HCT116 (cell line): ENCODE measurements at regions of chr16 and their contacts with region 1.

Region 1: DNA sequence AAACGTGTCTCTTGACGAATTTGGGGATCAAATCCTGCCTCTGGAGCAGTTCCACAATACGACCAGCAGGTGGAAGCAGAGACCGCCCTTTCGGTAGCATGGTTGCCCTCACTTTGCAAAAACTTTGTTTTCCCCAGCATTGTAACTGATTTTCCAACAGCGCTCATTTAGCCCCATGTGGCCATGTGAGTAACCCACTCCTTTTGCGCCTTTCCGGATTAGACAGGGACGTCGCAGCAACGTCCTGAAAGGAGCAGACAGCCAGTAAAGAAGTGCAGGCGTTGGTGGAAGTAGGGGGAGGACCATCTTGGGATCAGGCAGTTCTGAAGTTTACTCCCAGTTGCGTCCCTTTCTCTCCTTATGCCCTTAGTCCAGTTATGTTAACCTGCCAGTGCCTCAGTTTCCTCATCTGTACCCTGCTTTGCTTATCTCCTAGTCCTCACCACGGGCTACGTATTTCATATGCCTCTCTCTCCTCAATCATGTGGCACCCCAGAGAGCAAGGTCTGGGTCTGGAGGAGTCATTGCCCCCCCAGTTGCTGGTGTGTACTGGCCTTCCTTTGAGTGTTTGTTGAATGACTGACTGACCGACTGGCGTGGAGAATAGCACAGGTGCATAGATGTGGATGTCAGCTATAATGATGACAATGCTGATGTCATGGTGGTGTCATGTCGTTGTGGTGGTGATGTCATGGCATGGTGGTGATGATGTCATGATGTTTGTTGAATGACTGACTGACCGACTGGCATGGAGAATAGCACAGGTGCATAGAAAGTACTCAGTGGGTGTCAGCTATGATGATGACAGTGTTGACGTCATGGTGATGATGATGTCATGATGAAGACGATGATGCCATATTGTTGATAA is 22.3 kb downstream of the TMEM114 start:
- DNase-seq: peak; percentile 94
- ATAC-seq: peak; percentile 89
- H3K4me3 ChIP-seq: no peak overlapping the region
- H3K27ac ChIP-seq: no peak overlapping the region
- H3K4me1 ChIP-seq: peaks cover 0 to 4% of the 10 kb centered on the region in 2 experiments; a peak in 1 of 4 replicates
- H3K27me3 ChIP-seq: no peaks in the 10 kb centered on the region
- CTCF ChIP-seq: peak; percentile 98 to 99 (median 99)
- POLR2A ChIP-seq: no peak
- RAD21 ChIP-seq: peak; percentile 99

Region 2: DNA sequence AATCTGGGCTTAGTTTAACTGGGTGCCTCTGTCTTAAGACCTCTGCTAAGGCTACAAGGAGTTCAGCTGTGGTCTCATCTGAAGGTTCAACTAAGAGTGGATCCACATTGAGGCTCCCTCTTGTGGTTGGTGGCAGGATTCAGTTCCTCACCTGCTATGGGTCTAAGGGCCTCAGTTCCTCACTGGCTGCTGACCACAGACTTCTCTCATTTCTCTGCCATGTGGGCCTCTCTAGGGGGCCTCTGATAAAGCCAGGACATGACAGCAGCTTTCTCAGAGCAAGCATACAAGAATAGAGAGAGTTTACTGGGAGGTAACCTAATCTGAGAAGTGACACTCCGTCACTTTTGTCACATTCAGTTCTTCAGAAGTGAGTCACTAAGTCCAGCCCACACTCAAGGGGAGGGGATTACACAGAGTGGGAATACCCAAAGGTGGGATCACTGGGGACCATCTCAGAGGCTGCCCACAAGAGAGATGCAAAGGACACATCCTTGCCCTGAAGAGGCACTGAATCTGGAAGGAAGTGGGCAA is 87.3 kb after region 1 on chr16:
- CTCF ChIA-PET with region 1: interaction called, 3 read pairs
- POLR2A ChIA-PET with region 1: no interaction called
- RAD21 ChIA-PET with region 1: no interaction called
- intact Hi-C with region 1: loop called (anchors 2 kb)
- DNase-seq: no peak
- ATAC-seq: peak; percentile 62; the same call in 1 of the 2 replicates
- H3K4me3 ChIP-seq: no peak overlapping the region
- H3K27ac ChIP-seq: no peak overlapping the region
- H3K4me1 ChIP-seq: no peaks in the 10 kb centered on the region
- H3K27me3 ChIP-seq: no peaks in the 10 kb centered on the region
- CTCF ChIP-seq: peak; percentile 27 to 56 (median 55); a peak in 5 of 6 replicates
- POLR2A ChIP-seq: no peak
- RAD21 ChIP-seq: peak; percentile 38; the same call in 1 of the 2 replicates

Region 3: DNA sequence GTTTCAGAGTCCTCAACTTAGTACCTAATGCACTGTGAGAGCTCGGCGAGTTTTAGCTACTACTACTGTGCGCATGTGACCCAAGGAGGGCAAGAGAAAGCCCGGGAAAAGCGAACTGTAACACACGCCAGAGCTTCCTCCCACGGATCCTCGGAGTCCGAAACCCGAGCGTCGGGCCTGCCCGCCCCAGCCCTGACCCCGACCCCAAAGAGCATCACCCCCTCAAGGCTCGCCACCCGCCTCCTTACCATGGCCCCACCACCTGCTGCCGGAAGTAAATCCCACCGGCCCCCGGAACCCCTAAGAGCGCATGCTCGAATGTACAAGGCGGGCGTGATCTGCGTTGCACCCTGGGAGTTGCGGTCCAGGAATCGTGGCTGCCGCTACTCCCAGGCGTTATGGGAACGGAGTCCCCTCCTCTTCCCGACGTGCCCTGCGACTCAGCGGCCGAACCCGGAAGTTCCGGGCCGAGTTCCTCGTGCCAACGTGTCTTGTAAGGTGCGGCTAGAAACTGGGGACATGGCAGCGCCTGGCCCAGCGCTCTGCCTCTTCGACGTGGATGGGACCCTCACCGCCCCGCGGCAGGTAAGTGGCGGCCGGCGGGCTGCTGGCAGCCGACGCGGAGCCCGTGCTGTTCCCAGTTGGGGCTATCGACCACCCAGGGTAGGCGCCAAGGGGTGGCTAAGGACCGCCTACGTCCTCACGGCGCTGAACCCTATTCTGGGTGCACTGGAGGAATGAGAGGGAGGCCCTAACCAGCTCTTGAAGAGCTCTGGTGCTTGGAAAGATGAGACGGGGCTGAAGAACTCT is 229.6 kb after region 1 on chr16 and contains the starts of genes PMM2 and TMEM186:
- CTCF ChIA-PET with region 1: no interaction called
- POLR2A ChIA-PET with region 1: no interaction called
- RAD21 ChIA-PET with region 1: no interaction called
- intact Hi-C with region 1: loop called (anchors 1 kb)
- DNase-seq: peak; percentile 88
- ATAC-seq: peak; percentile 96
- H3K4me3 ChIP-seq: peak within 1 kb of the TSS; percentile 87 to 97
- H3K27ac ChIP-seq: peak within 1 kb of the TSS; percentile 74
- H3K4me1 ChIP-seq: peaks cover 12 to 24% of the 10 kb centered on the region in 2 experiments
- H3K27me3 ChIP-seq: no peaks in the 10 kb centered on the region
- CTCF ChIP-seq: no peak
- POLR2A ChIP-seq: no peak
- RAD21 ChIP-seq: no peak
- total RNA-seq, gene PMM2: 53.3 TPM
- total RNA-seq, gene TMEM186: 14.0 TPM

Region 4: GRCh38 chr16:8878521-8878911 is 310.5 kb after region 1 on chr16:
- CTCF ChIA-PET with region 1: interaction called, 4 read pairs
- POLR2A ChIA-PET with region 1: no interaction called
- RAD21 ChIA-PET with region 1: no interaction called
- intact Hi-C with region 1: loop called (anchors 2 kb)
- DNase-seq: no peak
- ATAC-seq: peak; percentile 24; the same call in 1 of the 2 replicates
- H3K4me3 ChIP-seq: no peak overlapping the region
- H3K27ac ChIP-seq: 0 out of 2 replicates have a peak overlapping the region, but pooled peaks have one; percentile 21
- H3K4me1 ChIP-seq: peaks cover 8 to 22% of the 10 kb centered on the region in 2 experiments
- H3K27me3 ChIP-seq: no peaks in the 10 kb centered on the region
- CTCF ChIP-seq: no peak
- POLR2A ChIP-seq: no peak
- RAD21 ChIP-seq: no peak